Psoas muscle (tissue), 8 donors: ENCODE measurements at regions of chr10 and their contacts with region 1.

Region 1: GRCh38 chr10:130935131-130935445 is 376.4 kb downstream of the TCERG1L start:
- DNase-seq: peak in 1 of 2 donors; percentile 22
- ATAC-seq: no peak
- H3K4me3 ChIP-seq: no peak overlapping the region
- H3K27ac ChIP-seq: no peak overlapping the region
- H3K4me1 ChIP-seq: no peaks in the 10 kb centered on the region
- H3K27me3 ChIP-seq: peaks cover 0 to 4% (median 0%) of the 10 kb centered on the region in 3 donors
- CTCF ChIP-seq: no peak

Region 2: DNA sequence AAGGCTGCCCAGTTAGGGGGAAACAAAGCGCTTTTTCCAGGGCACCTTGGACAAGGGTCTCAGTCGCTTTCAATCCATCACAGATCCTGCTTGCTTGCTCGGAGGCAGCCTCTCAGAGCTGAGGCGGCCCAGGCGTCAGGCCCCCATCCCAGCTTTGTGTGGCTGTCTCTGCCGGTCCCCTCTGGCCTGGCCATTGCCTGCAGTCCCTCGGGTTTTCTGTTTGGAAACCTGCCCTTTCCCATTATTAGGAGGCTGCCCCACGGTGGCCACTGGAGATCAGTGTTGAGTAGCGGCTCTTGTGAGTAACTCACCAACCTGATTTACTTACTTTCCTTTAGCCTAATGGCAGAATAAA is 582.8 kb before region 1 on chr10:
- intact Hi-C with region 1: loop called in 1 of 2 experiments (anchors 10 kb)
- DNase-seq: no peak
- ATAC-seq: no peak
- H3K4me3 ChIP-seq: no peak overlapping the region
- H3K27ac ChIP-seq: no peak overlapping the region
- H3K4me1 ChIP-seq: no peaks in the 10 kb centered on the region
- H3K27me3 ChIP-seq: no peaks in the 10 kb centered on the region
- CTCF ChIP-seq: no peak

Region 3: GRCh38 chr10:130895161-130895560 is 39.9 kb before region 1 on chr10:
- intact Hi-C with region 1: no loop called
- DNase-seq: no peak
- ATAC-seq: no peak
- H3K4me3 ChIP-seq: no peak overlapping the region
- H3K27ac ChIP-seq: no peak overlapping the region
- H3K4me1 ChIP-seq: no peaks in the 10 kb centered on the region
- H3K27me3 ChIP-seq: peaks cover 0 to 5% (median 4%) of the 10 kb centered on the region in 3 donors
- CTCF ChIP-seq: no peak

Region 4: DNA sequence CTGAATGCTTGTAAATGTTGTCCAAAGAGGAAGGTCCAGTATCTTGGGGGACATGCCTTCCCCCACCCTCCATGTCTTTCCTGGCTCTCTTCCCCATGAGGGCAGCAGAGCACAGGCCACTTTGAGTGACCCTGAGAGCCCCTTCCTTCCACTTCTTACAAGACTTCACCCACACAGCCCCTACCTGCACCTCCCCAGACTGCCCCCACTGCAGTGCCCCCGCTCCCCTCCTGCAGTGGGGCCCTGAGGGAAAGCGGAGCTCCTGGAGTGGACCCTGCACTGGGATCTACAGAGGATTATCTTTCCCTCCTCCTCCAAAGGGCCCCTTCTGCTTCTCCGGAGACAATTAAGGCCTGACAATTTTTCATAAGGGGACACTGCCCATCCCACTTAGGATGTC is 49.6 kb after region 1 on chr10:
- intact Hi-C with region 1: no loop called
- DNase-seq: no peak
- ATAC-seq: no peak
- H3K4me3 ChIP-seq: no peak overlapping the region
- H3K27ac ChIP-seq: no peak overlapping the region
- H3K4me1 ChIP-seq: no peaks in the 10 kb centered on the region
- H3K27me3 ChIP-seq: no peaks in the 10 kb centered on the region
- CTCF ChIP-seq: no peak